WTC11 (cell line): ENCODE measurements at regions of chr16 and their contacts with region 1.

Region 1: GRCh38 chr16:106623-107324 is 28.7 kb downstream of the MPG start:
- DNase-seq: peak; percentile 50
- ATAC-seq: peak; percentile 87
- H3K4me3 Mint-ChIP-seq: no peak overlapping the region
- H3K27ac Mint-ChIP-seq: peak overlapping the region; percentile 32; the same call in 1 of the 2 replicates
- H3K4me1 Mint-ChIP-seq: 0 out of 2 replicates have a peak, but pooled peaks cover 3% of the 10 kb centered on the region
- H3K27me3 Mint-ChIP-seq: no peaks in the 10 kb centered on the region
- CTCF ChIP-seq: peak; percentile 84

Region 2: GRCh38 chr16:53346-54236 is 53.2 kb before region 1 on chr16 and contains the starts of genes POLR3K and SNRNP25:
- CTCF ChIA-PET with region 1: interaction called, 18 read pairs
- POLR2A ChIA-PET with region 1: no interaction called
- DNase-seq: peak; percentile 98
- ATAC-seq: peak; percentile 98
- H3K4me3 Mint-ChIP-seq: peak within 1 kb of the TSS; percentile 99
- H3K27ac Mint-ChIP-seq: peak within 1 kb of the TSS; percentile 99
- H3K4me1 Mint-ChIP-seq: peaks cover 13% of the 10 kb centered on the region
- H3K27me3 Mint-ChIP-seq: no peaks in the 10 kb centered on the region; the same call in 1 of the 2 replicates
- CTCF ChIP-seq: no peak
- total RNA-seq, gene POLR3K: 37.9 to 40.1 TPM (median 38.6 TPM) in 3 replicates
- total RNA-seq, gene SNRNP25: 51.6 to 55.9 TPM (median 54.7 TPM) in 3 replicates

Region 3: GRCh38 chr16:77807-78443 is 28.8 kb before region 1 on chr16 and contains the start of gene MPG:
- CTCF ChIA-PET with region 1: interaction called, 66 read pairs
- POLR2A ChIA-PET with region 1: no interaction called
- DNase-seq: peak; percentile 75
- ATAC-seq: peak; percentile 49
- H3K4me3 Mint-ChIP-seq: peak within 1 kb of the TSS; percentile 82
- H3K27ac Mint-ChIP-seq: no peak within 1 kb of the TSS; the same call in 1 of the 2 replicates
- H3K4me1 Mint-ChIP-seq: peaks cover 54% of the 10 kb centered on the region
- H3K27me3 Mint-ChIP-seq: no peaks in the 10 kb centered on the region; the same call in 1 of the 2 replicates
- CTCF ChIP-seq: no peak
- total RNA-seq, gene MPG: 60.0 to 62.0 TPM (median 60.0 TPM) in 3 replicates

Region 4: DNA sequence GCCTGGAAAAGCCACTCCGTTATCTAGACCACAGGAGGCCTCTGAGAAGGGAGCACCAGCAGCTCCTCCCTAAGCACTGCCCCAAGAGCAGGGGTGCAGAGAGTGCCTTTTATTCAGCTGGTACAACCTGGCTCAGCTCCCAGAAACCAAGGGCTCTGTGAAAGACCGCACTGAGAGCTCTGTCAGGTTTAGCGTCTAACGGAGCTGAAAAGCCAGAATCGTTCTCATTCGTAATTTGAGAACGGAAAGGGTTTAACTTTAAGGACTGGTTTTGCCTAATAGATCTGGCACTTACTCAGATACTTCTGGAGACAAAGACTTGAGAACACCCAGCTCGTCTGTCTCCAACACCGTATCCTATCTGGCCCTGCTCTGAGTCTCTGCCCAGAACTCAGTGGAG is 15.3 kb before region 1 on chr16:
- CTCF ChIA-PET with region 1: interaction called, 97 read pairs
- POLR2A ChIA-PET with region 1: interaction called, 5 read pairs
- DNase-seq: no peak
- ATAC-seq: no peak
- H3K4me3 Mint-ChIP-seq: no peak overlapping the region
- H3K27ac Mint-ChIP-seq: peak overlapping the region; percentile 12; the same call in 1 of the 2 replicates
- H3K4me1 Mint-ChIP-seq: no peaks in the 10 kb centered on the region
- H3K27me3 Mint-ChIP-seq: no peaks in the 10 kb centered on the region
- CTCF ChIP-seq: no peak

Region 5: GRCh38 chr16:129075-129474 is 22.3 kb after region 1 on chr16:
- CTCF ChIA-PET with region 1: interaction called, 14 read pairs
- POLR2A ChIA-PET with region 1: no interaction called
- DNase-seq: no peak
- ATAC-seq: no peak
- H3K4me3 Mint-ChIP-seq: no peak overlapping the region
- H3K27ac Mint-ChIP-seq: peak overlapping the region; percentile 15; the same call in 1 of the 2 replicates
- H3K4me1 Mint-ChIP-seq: no peaks in the 10 kb centered on the region
- H3K27me3 Mint-ChIP-seq: no peaks in the 10 kb centered on the region
- CTCF ChIP-seq: no peak

Region 6: DNA sequence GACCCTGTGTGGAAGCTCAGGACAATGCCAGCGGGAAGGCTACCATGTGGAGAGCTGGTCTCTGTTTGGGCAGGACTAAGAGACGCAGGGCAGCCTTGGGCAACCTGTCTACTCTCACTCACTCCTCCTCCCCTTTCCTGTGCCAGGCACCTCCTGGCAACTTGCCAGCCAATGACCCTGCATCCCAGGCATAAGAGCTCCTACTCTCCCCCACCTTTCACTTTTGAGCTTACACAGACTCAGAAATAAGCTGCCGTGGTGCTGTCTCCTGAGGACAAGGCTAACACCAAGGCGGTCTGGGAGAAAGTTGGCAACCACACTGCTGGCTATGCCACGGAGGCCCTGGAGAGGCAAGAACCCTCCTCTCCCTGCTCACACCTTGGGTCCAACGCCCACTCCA is 61.6 kb after region 1 on chr16:
- CTCF ChIA-PET with region 1: interaction called, 11 read pairs
- POLR2A ChIA-PET with region 1: no interaction called
- DNase-seq: no peak
- ATAC-seq: no peak
- H3K4me3 Mint-ChIP-seq: no peak overlapping the region
- H3K27ac Mint-ChIP-seq: no peak overlapping the region
- H3K4me1 Mint-ChIP-seq: peaks cover 26% of the 10 kb centered on the region
- H3K27me3 Mint-ChIP-seq: peaks cover 83% of the 10 kb centered on the region
- CTCF ChIP-seq: no peak

Region 7: GRCh38 chr16:352547-353403 is 246.0 kb after region 1 on chr16 and contains the start of gene AXIN1:
- CTCF ChIA-PET with region 1: interaction called, 23 read pairs
- POLR2A ChIA-PET with region 1: no interaction called
- DNase-seq: peak; percentile 100
- ATAC-seq: peak; percentile 90
- H3K4me3 Mint-ChIP-seq: peak within 1 kb of the TSS; percentile 76
- H3K27ac Mint-ChIP-seq: no peak within 1 kb of the TSS
- H3K4me1 Mint-ChIP-seq: peaks cover 6% of the 10 kb centered on the region
- H3K27me3 Mint-ChIP-seq: no peaks in the 10 kb centered on the region; the same call in 1 of the 2 replicates
- CTCF ChIP-seq: peak; percentile 52
- total RNA-seq, gene AXIN1: 48.0 to 50.3 TPM (median 48.9 TPM) in 3 replicates